CD14-positive monocyte (primary cell): ENCODE measurements at regions of chr1 and their contacts with region 1.

Region 1: DNA sequence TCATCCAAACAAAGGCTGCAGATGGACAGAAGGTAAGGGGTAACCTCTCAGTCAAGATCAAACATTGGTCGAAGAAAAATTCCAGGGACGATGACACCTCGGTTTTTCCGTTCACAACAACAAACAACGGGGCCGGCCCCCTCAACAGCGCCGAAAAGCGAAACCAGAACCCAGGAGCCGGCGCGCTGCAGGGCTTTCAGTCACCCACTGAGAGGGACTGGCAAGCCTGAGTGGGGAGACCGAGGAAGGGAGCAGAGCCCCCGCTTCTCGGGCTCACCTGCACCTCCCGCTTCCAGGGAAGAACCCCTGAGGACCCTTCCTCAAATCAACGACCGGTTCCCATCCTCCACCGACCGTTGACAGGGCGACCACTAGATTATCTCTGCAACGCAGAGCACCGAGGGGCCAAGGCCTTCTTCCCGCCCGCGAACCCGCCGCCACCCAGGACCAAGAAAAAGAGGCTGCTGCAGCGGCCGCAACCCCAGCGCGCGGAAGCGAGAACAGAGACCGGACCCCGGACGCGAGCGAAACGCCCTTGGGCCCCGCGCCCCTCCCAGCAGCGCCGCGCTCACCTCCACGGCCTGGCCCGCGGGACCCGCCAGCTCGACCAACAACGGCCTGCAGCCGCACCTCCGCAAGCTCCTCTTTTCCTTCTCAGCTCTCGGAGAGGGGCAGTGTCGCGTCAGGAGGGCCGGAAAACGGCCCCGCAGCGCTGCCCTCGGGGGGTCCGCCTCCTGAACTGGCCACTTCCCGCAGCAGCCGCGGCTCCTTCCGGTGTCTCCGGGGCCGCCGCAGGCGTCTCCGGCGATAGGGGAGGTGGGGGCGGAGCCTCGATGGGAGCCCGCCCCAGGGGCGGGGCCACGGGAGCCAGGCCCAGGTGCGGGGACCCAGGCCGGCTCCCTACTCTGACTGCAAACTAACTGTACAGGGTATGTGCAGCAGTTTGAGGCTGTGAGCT is at the start of gene USP33:
- DNase-seq: peak; percentile 69 to 82 (median 77)
- H3K4me3 ChIP-seq: peak within 1 kb of the TSS; percentile 74 to 99 (median 77)
- H3K4me3 Mint-ChIP-seq: peak within 1 kb of the TSS; percentile 92 to 96
- H3K27ac ChIP-seq: peak within 1 kb of the TSS; percentile 53 to 92
- H3K27ac Mint-ChIP-seq: peak within 1 kb of the TSS; percentile 90 to 95 (median 92)
- H3K4me1 ChIP-seq: peaks cover 15 to 23% of the 10 kb centered on the region in 2 donors
- H3K4me1 Mint-ChIP-seq: peaks cover 45% of the 10 kb centered on the region
- H3K27me3 ChIP-seq: no peaks in the 10 kb centered on the region
- H3K27me3 Mint-ChIP-seq: peaks cover 0 to 2% (median 2%) of the 10 kb centered on the region in 3 donors
- CTCF ChIP-seq: no peak
- polyA plus RNA-seq, gene USP33: 33.5 to 43.8 (median 34.9) TPM

Region 2: DNA sequence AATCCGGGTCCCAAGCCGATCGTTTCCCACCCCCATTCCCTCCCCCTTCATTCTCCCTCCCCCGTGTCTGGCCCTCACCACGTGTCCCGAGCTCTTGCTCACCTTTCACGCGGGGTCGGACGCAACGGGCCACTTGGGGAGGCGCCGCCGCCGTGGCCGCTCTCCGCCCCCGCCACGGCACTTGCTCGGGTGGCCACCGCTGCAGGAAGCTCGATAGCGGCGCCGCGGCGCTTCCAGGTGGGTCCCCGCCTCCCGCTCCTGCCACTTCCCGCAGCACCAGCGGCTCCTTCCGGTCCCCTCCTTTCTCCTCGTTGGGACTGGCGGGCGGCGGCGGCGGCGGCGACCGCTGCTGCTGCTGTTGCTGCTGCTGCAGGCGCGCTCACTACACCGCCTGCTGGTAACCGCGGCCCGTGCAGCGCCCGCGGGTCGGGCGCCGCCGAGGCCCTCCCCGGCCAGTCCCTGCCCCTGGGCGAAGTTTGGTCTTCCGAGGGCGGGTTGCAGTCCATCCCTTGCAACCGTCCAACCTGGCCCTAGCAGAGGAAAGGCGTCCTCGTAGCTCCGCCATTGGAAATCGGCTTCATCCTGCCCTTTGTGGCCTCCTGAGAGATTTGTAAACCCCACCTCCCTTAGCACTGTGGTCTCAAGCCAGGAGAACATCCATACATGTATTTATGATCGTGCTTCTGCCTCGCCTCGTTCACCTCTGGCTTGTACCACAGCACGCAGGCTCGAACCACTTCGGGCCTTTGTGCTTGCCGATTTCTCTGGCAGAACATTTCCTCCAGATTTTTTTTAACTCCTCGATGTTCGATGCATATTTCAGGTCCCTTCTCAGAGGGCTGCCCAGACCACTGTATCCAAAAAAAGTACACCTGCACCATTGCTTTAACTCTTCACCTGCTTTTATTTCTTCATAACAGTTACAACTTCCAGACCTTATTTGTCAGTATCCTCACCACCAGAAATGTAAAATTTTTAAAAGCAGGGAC is 75.9 kb before region 1 on chr1:
- intact Hi-C with region 1: loop called in 1 of 2 experiments (anchors 10 kb)
- DNase-seq: peak; percentile 80 to 89 (median 87)
- H3K4me3 ChIP-seq: peak overlapping the region; percentile 88 to 96 (median 94)
- H3K4me3 Mint-ChIP-seq: peak overlapping the region; percentile 97 to 99
- H3K27ac ChIP-seq: peak overlapping the region; percentile 95 to 98
- H3K27ac Mint-ChIP-seq: peak overlapping the region; percentile 96 to 99 (median 97)
- H3K4me1 ChIP-seq: peaks cover 19 to 23% of the 10 kb centered on the region in 2 donors
- H3K4me1 Mint-ChIP-seq: peaks cover 41% of the 10 kb centered on the region
- H3K27me3 ChIP-seq: no peaks in the 10 kb centered on the region
- H3K27me3 Mint-ChIP-seq: no peaks in the 10 kb centered on the region
- CTCF ChIP-seq: peak; percentile 88